ENCODE measurements at regions of chr1 and their contacts with region 1.

Region 1: GRCh38 chr1:222792744-222793143 is 22.1 kb upstream of the DISP1 start:
- DNase-seq: no peak
- H3K4me3 Mint-ChIP-seq: no peak overlapping the region
- H3K27ac Mint-ChIP-seq: no peak overlapping the region
- H3K4me1 Mint-ChIP-seq: peaks cover 6% of the 10 kb centered on the region
- H3K27me3 Mint-ChIP-seq: no peaks in the 10 kb centered on the region

Region 2: GRCh38 chr1:222880586-222880985 is 87.8 kb after region 1 on chr1:
- CTCF ChIA-PET with region 1: no interaction called
- intact Hi-C with region 1: no loop called
- DNase-seq: peak; percentile 52
- H3K4me3 Mint-ChIP-seq: no peak overlapping the region
- H3K27ac Mint-ChIP-seq: peak overlapping the region; percentile 53
- H3K4me1 Mint-ChIP-seq: peaks cover 23% of the 10 kb centered on the region
- H3K27me3 Mint-ChIP-seq: no peaks in the 10 kb centered on the region

Region 3: DNA sequence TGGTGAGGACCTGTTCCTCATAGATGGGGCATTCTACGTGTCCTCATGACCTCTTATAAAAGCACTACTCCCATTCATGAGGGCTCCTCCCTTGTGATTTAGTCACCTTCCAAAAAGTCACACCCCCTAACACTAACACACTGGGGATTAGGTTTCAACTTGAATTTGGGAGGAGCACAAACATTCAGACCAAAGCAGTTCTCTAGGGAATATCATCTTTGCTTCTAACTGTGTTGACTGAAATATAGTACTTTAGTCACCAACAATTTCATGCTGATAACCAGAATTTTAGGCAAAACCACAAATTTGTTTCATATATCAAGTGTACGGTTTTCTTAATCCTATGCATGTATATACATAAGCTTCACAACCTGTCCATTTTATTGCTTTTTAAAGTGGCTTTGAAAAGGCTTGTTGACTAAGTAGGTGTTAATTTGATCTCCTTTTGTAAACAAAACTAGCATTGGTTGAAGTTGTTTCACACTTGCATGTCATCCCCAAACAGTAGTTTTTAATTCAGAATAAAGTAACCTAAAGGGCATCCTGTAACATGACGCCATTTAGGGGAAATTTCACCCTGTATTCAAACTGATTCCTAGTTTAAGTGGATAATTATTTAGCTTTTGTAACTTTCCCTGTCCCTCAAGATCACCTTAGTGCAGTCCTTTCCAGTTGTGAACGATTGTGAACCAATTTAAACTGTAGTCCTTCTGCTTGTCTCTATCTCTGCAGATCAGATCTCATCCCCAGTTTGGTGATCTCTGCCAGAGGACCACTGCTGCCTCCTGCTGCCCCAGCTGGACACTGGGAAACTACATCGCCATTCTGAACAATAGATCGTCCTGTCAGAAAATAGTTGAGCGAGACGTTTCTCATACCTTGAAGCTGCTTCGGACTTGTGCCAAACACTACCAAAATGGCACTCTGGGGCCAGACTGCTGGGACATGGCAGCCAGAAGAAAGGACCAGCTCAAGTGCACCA is 209.2 kb after region 1 on chr1:
- CTCF ChIA-PET with region 1: no interaction called
- intact Hi-C with region 1: loop called (anchors 5 kb)
- DNase-seq: no peak
- H3K4me3 Mint-ChIP-seq: no peak overlapping the region
- H3K27ac Mint-ChIP-seq: no peak overlapping the region
- H3K4me1 Mint-ChIP-seq: no peaks in the 10 kb centered on the region
- H3K27me3 Mint-ChIP-seq: no peaks in the 10 kb centered on the region

Region 4: DNA sequence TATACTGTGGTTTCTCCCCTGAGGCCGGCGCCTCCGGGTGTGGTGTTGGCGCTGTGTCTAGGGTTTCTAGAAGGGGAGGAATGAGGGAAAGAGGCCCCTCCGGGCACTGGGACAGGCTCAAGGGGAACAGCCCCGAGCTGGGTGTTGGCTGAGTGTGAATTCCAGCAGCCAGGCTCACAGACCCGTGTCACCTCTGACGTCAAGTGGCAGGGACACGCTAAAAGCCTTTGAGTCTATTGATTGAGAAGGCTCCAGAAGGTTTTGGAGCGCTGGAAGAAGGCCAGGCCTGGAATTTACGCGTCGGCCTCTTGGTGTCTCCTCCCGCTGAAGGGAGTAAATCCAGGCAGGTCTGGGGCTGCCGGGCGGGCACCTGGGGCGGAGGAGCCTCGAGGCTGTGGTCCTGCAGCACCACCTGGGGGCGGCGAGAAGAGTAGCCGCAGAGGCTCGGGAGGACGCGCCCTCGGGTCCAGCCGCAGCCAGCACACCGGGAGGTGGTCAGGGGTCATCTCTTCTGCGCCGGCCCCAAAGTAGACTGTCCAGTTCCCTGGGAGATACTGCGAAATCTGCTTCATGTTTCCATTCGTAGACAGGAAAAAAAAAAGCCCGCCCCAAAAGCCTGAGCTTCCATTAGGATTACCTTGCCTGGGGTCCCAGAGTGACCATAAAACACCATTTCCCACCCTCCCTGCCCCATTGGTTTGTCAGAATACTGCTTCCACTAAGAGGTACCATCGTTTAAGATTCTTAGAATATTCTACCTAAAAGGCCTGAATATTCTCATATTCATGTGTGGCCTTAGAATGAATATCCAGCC is 288.6 kb after region 1 on chr1:
- CTCF ChIA-PET with region 1: interaction called, 10 read pairs
- intact Hi-C with region 1: loop called (anchors 1 kb)
- DNase-seq: peak; percentile 81
- H3K4me3 Mint-ChIP-seq: peak overlapping the region; percentile 61
- H3K27ac Mint-ChIP-seq: no peak overlapping the region
- H3K4me1 Mint-ChIP-seq: no peaks in the 10 kb centered on the region
- H3K27me3 Mint-ChIP-seq: no peaks in the 10 kb centered on the region

Region 5: DNA sequence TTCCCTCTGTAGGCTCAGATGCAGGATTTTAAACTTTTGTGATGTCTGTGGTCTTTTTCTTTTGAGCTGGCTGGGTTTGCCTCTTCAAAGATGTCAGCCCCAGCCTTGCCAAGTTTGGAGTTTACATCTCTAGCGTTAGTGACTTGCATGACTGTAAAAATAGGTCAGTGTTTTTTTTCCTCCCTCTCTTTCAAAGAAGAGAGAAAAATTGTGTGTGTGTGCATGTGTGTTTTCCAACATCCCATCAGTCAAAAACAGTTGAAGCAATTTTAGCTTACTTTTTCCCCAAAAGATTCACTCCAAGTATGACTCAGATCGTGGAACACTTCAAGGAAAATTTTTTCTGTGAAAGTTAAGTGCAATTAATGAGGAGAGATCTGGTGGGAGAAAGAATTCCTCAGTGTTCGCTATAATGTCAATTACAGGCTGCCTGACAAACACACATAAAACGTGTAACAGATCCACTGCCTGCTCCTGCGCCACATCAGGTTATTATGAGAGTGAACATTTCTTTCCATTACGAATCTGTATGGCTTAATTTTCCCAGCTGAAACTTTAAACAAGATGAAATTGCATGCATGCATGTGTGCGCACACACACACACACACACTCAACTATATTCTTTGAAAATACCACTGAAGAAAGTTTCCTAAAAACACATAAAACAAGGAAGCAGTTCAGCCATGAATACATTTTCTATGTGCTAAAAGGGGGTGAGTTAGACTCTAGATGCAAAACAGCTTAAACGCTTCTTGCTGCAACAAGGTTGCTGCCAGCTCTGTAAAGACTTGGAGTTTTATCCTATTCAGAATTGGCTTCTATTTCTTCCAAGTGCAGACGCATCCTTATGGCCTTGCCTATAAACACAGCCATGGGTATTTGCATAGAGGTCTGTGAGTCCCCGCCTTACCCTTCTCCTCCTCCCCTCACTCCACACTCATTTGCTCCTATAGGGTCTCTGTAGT is 294.8 kb after region 1 on chr1:
- CTCF ChIA-PET with region 1: interaction called, 22 read pairs
- intact Hi-C with region 1: no loop called
- DNase-seq: no peak
- H3K4me3 Mint-ChIP-seq: no peak overlapping the region
- H3K27ac Mint-ChIP-seq: no peak overlapping the region
- H3K4me1 Mint-ChIP-seq: peaks cover 10% of the 10 kb centered on the region
- H3K27me3 Mint-ChIP-seq: no peaks in the 10 kb centered on the region

Region 6: GRCh38 chr1:223683586-223684487 is 891.1 kb after region 1 on chr1:
- CTCF ChIA-PET with region 1: no interaction called
- intact Hi-C with region 1: loop called (anchors 10 kb)
- DNase-seq: peak; percentile 78
- H3K4me3 Mint-ChIP-seq: no peak overlapping the region
- H3K27ac Mint-ChIP-seq: no peak overlapping the region
- H3K4me1 Mint-ChIP-seq: peaks cover 3% of the 10 kb centered on the region
- H3K27me3 Mint-ChIP-seq: no peaks in the 10 kb centered on the region

Measured in activated naive CD4-positive, alpha-beta T cell treated with anti-CD3 and anti-CD28 coated beads for 36 hours (primary cell).